ENCODE measurements at regions of chr19 and their contacts with region 1.

Region 1: GRCh38 chr19:45478454-45479238 is 10.8 kb downstream of the FOSB start:
- DNase-seq: peak; percentile 89 to 99
- ATAC-seq: peak; percentile 69 to 80
- H3K4me3 ChIP-seq: peak overlapping the region; percentile 42
- H3K27ac ChIP-seq: peak overlapping the region; percentile 81 to 89
- H3K4me1 ChIP-seq: peaks cover 13% of the 10 kb centered on the region
- CTCF ChIP-seq: peak; percentile 99
- EP300 ChIP-seq: no peak
- POLR2A ChIP-seq: no peak
- RAD21 ChIP-seq: peak; percentile 98 to 99

Region 2: GRCh38 chr19:45413497-45413896 is 65.1 kb before region 1 on chr19:
- CTCF ChIA-PET with region 1: interaction called, 39 read pairs
- POLR2A ChIA-PET with region 1: no interaction called
- DNase-seq: no peak
- ATAC-seq: no peak
- H3K4me3 ChIP-seq: no peak overlapping the region
- H3K27ac ChIP-seq: no peak overlapping the region
- H3K4me1 ChIP-seq: 0 out of 3 replicates have a peak, but pooled peaks cover 4% of the 10 kb centered on the region
- CTCF ChIP-seq: no peak
- EP300 ChIP-seq: no peak
- POLR2A ChIP-seq: no peak
- RAD21 ChIP-seq: no peak

Region 3: DNA sequence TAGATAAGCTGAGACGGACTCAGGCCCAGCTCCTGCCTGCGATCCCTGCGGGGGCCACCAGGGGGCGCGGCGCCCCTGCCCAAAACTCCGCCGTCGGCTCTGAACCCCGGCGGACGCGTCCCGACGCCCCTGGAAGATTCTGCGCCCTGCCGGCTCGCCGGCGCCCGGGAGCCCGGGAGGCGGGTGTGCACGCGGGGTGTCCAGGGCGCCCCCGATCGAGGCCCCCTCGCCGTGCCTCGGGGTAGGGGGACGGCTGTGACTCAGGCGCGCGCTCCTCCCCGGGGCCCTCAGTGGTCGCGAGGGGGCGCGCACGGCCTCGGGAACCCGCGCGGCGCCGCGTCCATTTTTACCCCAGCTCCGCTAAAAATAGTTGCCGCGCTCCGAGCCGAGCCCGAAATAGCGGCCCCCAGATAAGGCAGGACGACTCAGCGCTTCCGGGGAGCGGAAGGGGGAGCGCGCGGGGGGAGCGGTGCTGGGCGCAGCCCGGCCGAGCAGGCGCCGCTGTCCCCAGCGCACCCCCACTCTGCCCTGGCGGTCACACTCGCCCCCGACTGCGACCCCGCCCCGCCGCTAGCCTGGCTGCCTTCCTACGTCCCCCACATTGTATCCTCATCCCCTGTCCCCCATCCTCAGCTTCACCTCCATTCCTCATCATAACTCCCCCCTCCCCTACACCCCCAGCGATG is 38.9 kb before region 1 on chr19:
- CTCF ChIA-PET with region 1: interaction called, 1,883 read pairs
- POLR2A ChIA-PET with region 1: interaction called, 34 read pairs
- DNase-seq: peak; percentile 74 to 83
- ATAC-seq: peak; percentile 26 to 55
- H3K4me3 ChIP-seq: peak overlapping the region; percentile 52
- H3K27ac ChIP-seq: peak overlapping the region; percentile 80 to 95
- H3K4me1 ChIP-seq: peaks cover 27% of the 10 kb centered on the region
- CTCF ChIP-seq: peak; percentile 100
- EP300 ChIP-seq: no peak
- POLR2A ChIP-seq: peak; percentile 12; the same call in 1 of the 2 replicates
- RAD21 ChIP-seq: peak; percentile 77 to 99

Region 4: GRCh38 chr19:45455707-45456499 is 22.7 kb before region 1 on chr19:
- CTCF ChIA-PET with region 1: interaction called, 169 read pairs
- POLR2A ChIA-PET with region 1: no interaction called
- DNase-seq: peak; percentile 98 to 99
- ATAC-seq: peak; percentile 86 to 91
- H3K4me3 ChIP-seq: peak overlapping the region; percentile 28
- H3K27ac ChIP-seq: peak overlapping the region; percentile 84 to 89
- H3K4me1 ChIP-seq: peaks cover 45% of the 10 kb centered on the region
- CTCF ChIP-seq: no peak
- EP300 ChIP-seq: peak; percentile 77 to 92; a peak in 4 of 5 replicates
- POLR2A ChIP-seq: no peak
- RAD21 ChIP-seq: peak; percentile 6 to 27; a peak in 1 of 5 replicates

Region 5: GRCh38 chr19:45496349-45496953 is 17.8 kb after region 1 on chr19:
- CTCF ChIA-PET with region 1: interaction called, 107 read pairs
- POLR2A ChIA-PET with region 1: no interaction called
- DNase-seq: no peak
- ATAC-seq: peak; percentile 22 to 46
- H3K4me3 ChIP-seq: peak overlapping the region; percentile 75
- H3K27ac ChIP-seq: peak overlapping the region; percentile 61 to 83; a peak in 5 of 6 replicates
- H3K4me1 ChIP-seq: peaks cover 20% of the 10 kb centered on the region
- CTCF ChIP-seq: no peak
- EP300 ChIP-seq: no peak
- POLR2A ChIP-seq: no peak
- RAD21 ChIP-seq: no peak

Region 6: DNA sequence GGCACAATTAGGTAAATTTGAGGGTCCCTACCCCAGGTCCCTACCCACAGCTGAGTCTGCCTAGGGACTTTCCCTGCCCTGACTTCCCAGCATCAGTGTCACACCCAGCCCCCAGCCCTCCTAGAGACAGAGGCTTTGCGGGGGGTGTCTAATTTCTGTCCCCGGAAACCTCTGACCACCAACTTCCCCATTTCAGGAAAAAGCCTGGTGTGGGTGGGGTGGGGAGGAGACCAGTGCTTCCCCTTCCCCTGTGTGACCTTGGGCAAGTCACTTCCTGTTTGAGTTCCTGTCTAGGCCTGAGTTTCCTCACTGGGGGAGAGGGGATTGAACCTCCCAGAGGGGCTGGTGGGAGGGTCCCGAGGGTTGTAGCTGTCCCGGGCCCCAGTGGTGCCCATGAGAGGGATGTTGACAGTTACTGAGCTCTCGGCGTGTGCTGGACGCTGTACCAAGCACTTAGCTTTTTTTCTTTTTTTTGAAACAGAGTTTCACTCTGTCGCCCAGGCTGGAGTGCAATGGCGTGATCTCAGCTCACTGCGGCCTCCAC is 36.5 kb after region 1 on chr19:
- CTCF ChIA-PET with region 1: interaction called, 11 read pairs
- POLR2A ChIA-PET with region 1: no interaction called
- DNase-seq: no peak
- ATAC-seq: no peak
- H3K4me3 ChIP-seq: no peak overlapping the region
- H3K27ac ChIP-seq: peak overlapping the region; percentile 63 to 83
- H3K4me1 ChIP-seq: peaks cover 69% of the 10 kb centered on the region
- CTCF ChIP-seq: no peak
- EP300 ChIP-seq: no peak
- POLR2A ChIP-seq: no peak
- RAD21 ChIP-seq: no peak

Region 7: GRCh38 chr19:45542234-45542668 is 63.6 kb after region 1 on chr19:
- CTCF ChIA-PET with region 1: no interaction called
- POLR2A ChIA-PET with region 1: no interaction called
- DNase-seq: no peak
- ATAC-seq: peak; percentile 59 to 72
- H3K4me3 ChIP-seq: no peak overlapping the region
- H3K27ac ChIP-seq: peak overlapping the region in 1 of 2 experiments; percentile 56; a peak in 3 of 6 replicates
- H3K4me1 ChIP-seq: peaks cover 8% of the 10 kb centered on the region
- CTCF ChIP-seq: no peak
- EP300 ChIP-seq: no peak
- POLR2A ChIP-seq: no peak
- RAD21 ChIP-seq: no peak

Region 8: GRCh38 chr19:45710356-45711130 is 231.9 kb after region 1 on chr19:
- CTCF ChIA-PET with region 1: no interaction called
- POLR2A ChIA-PET with region 1: no interaction called
- DNase-seq: no peak
- ATAC-seq: no peak
- H3K4me3 ChIP-seq: no peak overlapping the region
- H3K27ac ChIP-seq: no peak overlapping the region
- H3K4me1 ChIP-seq: peaks cover 10% of the 10 kb centered on the region
- CTCF ChIP-seq: no peak
- EP300 ChIP-seq: no peak
- POLR2A ChIP-seq: no peak
- RAD21 ChIP-seq: no peak

Measured in A549 (cell line).